ENCODE measurements at regions of chr10 and their contacts with region 1.

Region 1: GRCh38 chr10:69914398-69915214 is 112.9 kb downstream of the COL13A1 start:
- DNase-seq: peak; percentile 58
- H3K4me3 ChIP-seq: no peak overlapping the region
- H3K27ac ChIP-seq: no peak overlapping the region
- H3K4me1 ChIP-seq: peaks cover 17% of the 10 kb centered on the region
- H3K27me3 ChIP-seq: no peaks in the 10 kb centered on the region
- CTCF ChIP-seq: peak; percentile 93 to 96
- POLR2A ChIP-seq: no peak

Region 2: GRCh38 chr10:69696073-69696731 is 218.4 kb before region 1 on chr10:
- CTCF ChIA-PET with region 1: interaction called, 6 read pairs
- POLR2A ChIA-PET with region 1: no interaction called
- dilution Hi-C with region 1: no loop called
- intact Hi-C with region 1: loop called (anchors 1 kb)
- DNase-seq: peak; percentile 70
- H3K4me3 ChIP-seq: no peak overlapping the region
- H3K27ac ChIP-seq: no peak overlapping the region
- H3K4me1 ChIP-seq: peaks cover 2% of the 10 kb centered on the region
- H3K27me3 ChIP-seq: peaks cover 9 to 15% of the 10 kb centered on the region in 2 experiments
- CTCF ChIP-seq: peak; percentile 56 to 60
- POLR2A ChIP-seq: no peak

Region 3: GRCh38 chr10:69786791-69787190 is 127.8 kb before region 1 on chr10:
- CTCF ChIA-PET with region 1: interaction called, 622 read pairs
- POLR2A ChIA-PET with region 1: no interaction called
- dilution Hi-C with region 1: no loop called
- intact Hi-C with region 1: loop called (anchors 1 kb)
- DNase-seq: peak; percentile 66
- H3K4me3 ChIP-seq: no peak overlapping the region
- H3K27ac ChIP-seq: no peak overlapping the region
- H3K4me1 ChIP-seq: no peaks in the 10 kb centered on the region
- H3K27me3 ChIP-seq: peaks cover 24 to 25% of the 10 kb centered on the region in 2 experiments
- CTCF ChIP-seq: peak; percentile 49 to 50
- POLR2A ChIP-seq: no peak

Region 4: DNA sequence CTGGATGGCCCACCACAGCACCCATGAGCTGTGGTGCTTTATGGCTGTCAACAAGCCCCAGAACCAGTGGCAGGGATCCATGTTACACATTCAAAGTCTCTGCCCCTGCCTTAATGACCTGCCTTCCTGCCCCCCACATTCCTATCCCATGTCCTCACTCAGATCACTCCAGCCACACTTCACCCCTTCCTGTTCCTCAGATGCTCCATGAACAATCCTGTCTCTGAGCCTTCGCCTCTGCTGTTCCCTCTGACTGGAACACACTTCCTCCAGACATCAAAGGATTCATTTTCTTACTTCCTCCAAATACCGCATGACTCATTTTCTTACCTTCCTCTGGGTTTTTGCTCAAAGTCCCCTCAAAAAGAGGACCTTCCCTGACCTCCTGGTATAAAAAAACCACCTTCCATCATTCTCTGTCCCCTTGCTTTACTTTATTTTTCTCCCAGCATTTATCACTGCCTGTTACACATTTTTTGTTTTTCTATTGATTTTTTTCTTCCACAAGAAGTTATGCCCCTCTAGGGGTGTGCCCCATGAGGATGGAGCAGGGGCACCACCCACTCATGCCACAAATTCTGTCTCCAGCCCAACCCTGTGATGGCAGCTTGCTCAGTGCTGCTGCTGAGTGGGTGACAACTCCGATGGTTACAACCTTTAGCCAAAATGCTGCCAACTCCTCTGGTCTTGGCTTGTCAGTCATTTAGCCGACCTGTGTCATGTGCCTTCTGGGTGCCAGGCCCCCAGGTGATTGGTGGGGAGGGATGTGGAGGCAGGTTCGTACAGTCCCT is 94.7 kb before region 1 on chr10:
- CTCF ChIA-PET with region 1: interaction called, 10 read pairs
- POLR2A ChIA-PET with region 1: no interaction called
- dilution Hi-C with region 1: no loop called
- intact Hi-C with region 1: no loop called
- DNase-seq: peak; percentile 71
- H3K4me3 ChIP-seq: no peak overlapping the region
- H3K27ac ChIP-seq: peak overlapping the region; percentile 87
- H3K4me1 ChIP-seq: peaks cover 37% of the 10 kb centered on the region
- H3K27me3 ChIP-seq: no peaks in the 10 kb centered on the region
- CTCF ChIP-seq: no peak
- POLR2A ChIP-seq: no peak

Region 5: DNA sequence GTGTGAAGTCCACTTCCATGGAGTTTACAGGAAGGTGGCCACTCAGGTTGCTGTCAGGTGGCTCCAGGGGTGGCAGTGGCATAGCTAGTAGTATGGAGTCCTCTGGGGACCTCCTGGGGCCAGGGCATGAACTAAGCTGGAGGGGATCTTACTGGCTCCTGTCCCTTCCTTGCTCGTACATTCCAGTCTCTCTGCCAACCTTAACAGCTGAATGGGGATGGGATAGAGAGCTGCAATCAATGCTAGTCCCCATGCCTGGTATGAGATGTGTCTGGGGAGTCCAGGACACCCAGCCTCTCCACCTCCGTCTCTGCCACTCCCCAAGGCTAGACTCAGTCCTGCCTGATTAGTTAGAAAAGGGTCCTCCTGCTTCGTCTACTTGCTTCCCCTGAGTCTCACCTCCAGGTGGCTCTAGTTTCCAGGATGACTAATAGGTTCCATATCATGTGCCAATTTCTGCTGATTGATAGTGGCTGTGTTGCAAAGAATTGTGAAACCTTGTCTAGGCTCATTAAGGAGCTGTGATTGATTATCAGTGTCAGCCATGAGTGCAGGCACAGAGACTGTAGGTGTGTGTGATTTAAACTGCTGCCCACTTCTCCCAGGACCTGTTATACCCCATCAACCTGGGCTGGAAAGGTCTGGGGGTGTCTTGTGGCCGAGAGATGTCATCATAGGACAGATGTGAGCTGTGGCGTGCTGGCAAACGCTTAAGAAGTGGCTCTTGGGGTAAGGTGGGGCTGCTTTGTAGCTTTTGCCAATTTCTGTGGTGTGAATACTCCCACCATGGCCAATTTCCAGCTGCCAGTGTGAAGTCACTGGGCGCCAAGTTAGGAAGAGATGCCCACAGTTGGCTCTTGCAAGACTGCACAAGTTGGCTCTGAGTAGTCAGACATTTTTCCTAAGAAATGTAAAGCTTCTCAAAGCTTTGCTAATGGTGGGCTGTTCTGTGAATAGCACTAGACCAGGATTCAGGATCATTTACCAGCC is 53.1 kb before region 1 on chr10:
- CTCF ChIA-PET with region 1: interaction called, 31 read pairs
- POLR2A ChIA-PET with region 1: no interaction called
- dilution Hi-C with region 1: no loop called
- intact Hi-C with region 1: loop called (anchors 2 kb)
- DNase-seq: peak; percentile 95
- H3K4me3 ChIP-seq: no peak overlapping the region
- H3K27ac ChIP-seq: peak overlapping the region; percentile 10
- H3K4me1 ChIP-seq: peaks cover 62% of the 10 kb centered on the region
- H3K27me3 ChIP-seq: no peaks in the 10 kb centered on the region
- CTCF ChIP-seq: peak; percentile 34 to 51
- POLR2A ChIP-seq: no peak

Region 6: GRCh38 chr10:69901628-69902505 is 12.7 kb before region 1 on chr10:
- CTCF ChIA-PET with region 1: interaction called, 66 read pairs
- POLR2A ChIA-PET with region 1: interaction called, 3 read pairs
- dilution Hi-C with region 1: no loop called
- intact Hi-C with region 1: loop called (anchors 1 kb)
- DNase-seq: peak; percentile 71
- H3K4me3 ChIP-seq: no peak overlapping the region
- H3K27ac ChIP-seq: peak overlapping the region; percentile 38
- H3K4me1 ChIP-seq: peaks cover 11% of the 10 kb centered on the region
- H3K27me3 ChIP-seq: no peaks in the 10 kb centered on the region
- CTCF ChIP-seq: peak; percentile 71 to 81
- POLR2A ChIP-seq: no peak

Region 7: DNA sequence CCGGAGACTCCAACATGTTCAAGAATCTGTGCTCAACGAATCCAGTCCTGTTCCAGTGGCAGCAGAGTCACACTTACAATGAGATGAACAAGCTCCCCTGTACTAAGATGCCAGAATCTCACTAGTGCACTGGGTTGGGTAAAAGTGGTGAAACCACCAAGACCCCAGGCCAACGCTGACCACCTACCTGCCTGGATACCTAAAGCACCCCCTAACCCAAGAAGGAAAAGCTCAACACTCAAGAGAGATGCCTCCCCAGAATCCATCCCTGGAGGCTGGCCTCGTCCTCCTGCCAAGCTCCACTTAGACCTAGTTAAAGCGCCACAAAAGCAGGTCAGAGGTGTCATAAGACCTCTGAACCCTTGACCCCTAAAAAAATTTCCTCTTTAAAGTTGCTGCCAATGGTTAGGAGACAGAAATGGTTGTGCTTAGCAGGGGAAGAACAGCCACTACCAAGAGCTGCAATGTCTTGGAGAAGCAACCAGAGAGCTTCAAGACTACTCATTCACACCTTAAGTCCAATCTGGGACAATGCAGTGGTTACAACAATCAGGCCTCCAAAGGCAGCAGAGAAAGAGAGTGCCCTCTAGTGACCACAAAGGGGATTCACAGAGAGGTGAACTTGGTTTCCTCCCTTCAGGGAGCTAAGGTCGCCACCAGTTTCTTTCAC is 43.4 kb after region 1 on chr10:
- CTCF ChIA-PET with region 1: interaction called, 37 read pairs
- POLR2A ChIA-PET with region 1: no interaction called
- dilution Hi-C with region 1: no loop called
- intact Hi-C with region 1: no loop called
- DNase-seq: peak; percentile 43
- H3K4me3 ChIP-seq: no peak overlapping the region
- H3K27ac ChIP-seq: no peak overlapping the region
- H3K4me1 ChIP-seq: no peaks in the 10 kb centered on the region
- H3K27me3 ChIP-seq: no peaks in the 10 kb centered on the region
- CTCF ChIP-seq: peak; percentile 85 to 90
- POLR2A ChIP-seq: no peak

Region 8: GRCh38 chr10:70404036-70404786 is 489.6 kb after region 1 on chr10 and contains the start of gene EIF4EBP2:
- CTCF ChIA-PET with region 1: no interaction called
- POLR2A ChIA-PET with region 1: no interaction called
- dilution Hi-C with region 1: no loop called
- intact Hi-C with region 1: no loop called
- DNase-seq: peak; percentile 99
- H3K4me3 ChIP-seq: peak within 1 kb of the TSS; percentile 64 to 83 (median 79)
- H3K27ac ChIP-seq: peak within 1 kb of the TSS; percentile 42
- H3K4me1 ChIP-seq: peaks cover 28% of the 10 kb centered on the region
- H3K27me3 ChIP-seq: no peaks in the 10 kb centered on the region
- CTCF ChIP-seq: no peak
- POLR2A ChIP-seq: peak; percentile 90
- total RNA-seq, gene EIF4EBP2: 46.6 and 47.0 TPM in 2 replicates